CD4-positive, alpha-beta T cell (primary cell): ENCODE measurements at regions of chr5 and their contacts with region 1.

Region 1: GRCh38 chr5:95975703-95976102 is 14.1 kb upstream of the ELL2 start:
- DNase-seq: no peak
- ATAC-seq: no peak
- H3K4me3 ChIP-seq: no peak overlapping the region
- H3K4me3 Mint-ChIP-seq: no peak overlapping the region
- H3K27ac ChIP-seq: no peak overlapping the region
- H3K27ac Mint-ChIP-seq: no peak overlapping the region
- H3K4me1 ChIP-seq: no peaks in the 10 kb centered on the region
- H3K4me1 Mint-ChIP-seq: no peaks in the 10 kb centered on the region
- H3K27me3 ChIP-seq: no peaks in the 10 kb centered on the region
- H3K27me3 Mint-ChIP-seq: peaks cover 29% of the 10 kb centered on the region
- CTCF ChIP-seq: no peak

Region 2: DNA sequence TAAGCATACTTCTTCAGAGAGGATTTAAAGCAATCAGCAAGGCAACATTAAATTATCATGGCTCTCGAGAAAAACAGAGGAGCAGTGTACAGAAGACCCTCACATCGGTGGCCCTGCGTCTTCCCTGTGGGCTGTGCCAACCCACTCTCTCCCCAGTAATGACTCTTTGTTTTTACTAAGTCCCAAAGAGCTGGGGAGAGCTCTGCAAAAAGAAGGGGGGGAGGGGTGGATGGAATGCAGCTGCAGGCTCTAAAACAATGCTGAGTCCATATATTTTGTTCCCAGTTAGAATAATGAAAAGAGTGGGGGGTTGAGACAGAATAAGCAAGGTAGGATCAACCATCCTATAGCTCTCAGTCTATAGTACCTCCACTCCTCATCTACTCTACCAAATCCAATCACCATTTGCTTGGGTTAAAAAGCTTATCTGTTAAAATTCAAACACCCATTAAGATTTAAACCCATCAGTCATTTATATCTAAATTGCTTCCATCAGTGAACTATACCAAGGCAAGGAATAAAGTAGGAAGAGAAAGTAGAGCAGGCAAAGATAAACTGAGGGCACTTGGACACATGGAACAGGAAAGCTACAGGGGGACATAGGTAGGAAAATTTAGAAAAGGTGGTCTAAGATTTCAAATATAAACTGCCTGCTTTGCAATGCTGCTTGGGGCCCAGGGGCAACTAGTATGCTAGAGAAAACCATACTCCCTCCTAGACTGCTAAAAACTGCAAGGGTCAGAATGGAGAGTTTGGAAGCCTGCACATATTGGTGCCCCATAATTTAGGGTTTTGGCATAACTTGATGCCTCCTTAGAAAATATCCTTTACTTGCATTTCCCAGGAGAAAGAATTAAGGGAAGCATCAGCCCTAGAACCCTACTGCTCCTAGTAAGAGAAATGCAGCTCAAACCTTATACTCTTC is 34.7 kb before region 1 on chr5:
- CTCF ChIA-PET with region 1: no interaction called
- POLR2A ChIA-PET with region 1: no interaction called
- intact Hi-C with region 1: loop called in 1 of 2 experiments (anchors 5 kb)
- DNase-seq: no peak
- ATAC-seq: no peak
- H3K4me3 ChIP-seq: no peak overlapping the region
- H3K4me3 Mint-ChIP-seq: no peak overlapping the region
- H3K27ac ChIP-seq: no peak overlapping the region
- H3K27ac Mint-ChIP-seq: no peak overlapping the region
- H3K4me1 ChIP-seq: no peaks in the 10 kb centered on the region
- H3K4me1 Mint-ChIP-seq: peaks cover 9% of the 10 kb centered on the region
- H3K27me3 ChIP-seq: no peaks in the 10 kb centered on the region
- H3K27me3 Mint-ChIP-seq: no peaks in the 10 kb centered on the region
- CTCF ChIP-seq: no peak